ENCODE measurements at regions of chr1 and their contacts with region 1.

Region 1: GRCh38 chr1:58783993-58784757 is at the start of gene JUN:
- DNase-seq: peak; percentile 92 to 100 (median 98)
- ATAC-seq: peak; percentile 69 to 73
- H3K4me3 Mint-ChIP-seq: peak within 1 kb of the TSS; percentile 79 to 100 (median 92)
- H3K27ac Mint-ChIP-seq: peak within 1 kb of the TSS; percentile 93 to 100 (median 100)
- H3K4me1 Mint-ChIP-seq: peaks cover 28 to 44% (median 42%) of the 10 kb centered on the region in 4 donors
- H3K27me3 Mint-ChIP-seq: peaks cover 0 to 6% (median 0%) of the 10 kb centered on the region in 5 donors
- polyA plus RNA-seq, gene JUN: 30.7 to 59.4 (median 32.0) TPM

Region 2: DNA sequence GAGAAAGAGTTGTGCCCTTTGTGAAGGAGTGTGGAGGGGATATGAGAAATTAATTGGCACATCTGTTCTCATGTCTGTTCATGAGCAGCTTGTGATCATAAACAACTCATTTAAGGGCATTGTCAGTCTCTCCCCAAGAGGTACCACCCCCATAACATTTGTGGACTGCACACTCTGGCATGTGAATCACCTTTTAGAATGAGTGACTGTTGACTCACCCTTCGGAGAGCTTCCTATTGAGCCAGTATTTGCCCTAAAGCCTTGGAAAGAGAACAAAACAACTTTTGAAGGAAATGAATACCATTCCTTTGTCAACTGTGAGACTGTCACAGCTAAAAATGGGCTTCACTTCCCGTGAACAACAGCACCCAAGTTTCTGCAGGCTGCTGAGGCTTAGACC is 56.8 kb before region 1 on chr1:
- POLR2A ChIA-PET with region 1: no interaction called
- DNase-seq: no peak
- ATAC-seq: no peak
- H3K4me3 Mint-ChIP-seq: no peak overlapping the region
- H3K27ac Mint-ChIP-seq: no peak overlapping the region
- H3K4me1 Mint-ChIP-seq: peaks cover 0 to 10% (median 2%) of the 10 kb centered on the region in 4 donors
- H3K27me3 Mint-ChIP-seq: no peaks in the 10 kb centered on the region

Region 3: DNA sequence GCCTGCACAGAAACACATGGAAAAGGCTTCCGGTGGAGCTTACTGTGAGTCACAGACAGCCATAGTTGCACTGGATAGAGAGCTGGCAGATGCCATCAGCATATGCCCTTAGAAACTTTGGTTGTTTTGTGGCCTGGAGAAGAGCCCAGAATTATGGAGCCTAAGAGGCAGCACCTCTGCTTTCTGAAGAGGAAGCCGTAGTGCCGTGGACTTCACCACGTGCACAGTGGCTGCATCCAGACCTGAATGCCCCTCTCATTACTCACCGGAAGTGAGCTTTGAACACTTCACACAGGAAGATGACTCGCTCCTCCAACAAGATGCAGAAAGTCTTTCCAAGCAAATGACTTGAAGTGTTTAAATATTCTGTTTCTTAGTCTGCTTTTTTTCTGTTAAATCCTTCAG is 28.7 kb before region 1 on chr1:
- POLR2A ChIA-PET with region 1: interaction called, 11 read pairs
- DNase-seq: peak in 6 of 10 donors; percentile 3 to 43 (median 17)
- ATAC-seq: peak; percentile 69 to 74
- H3K4me3 Mint-ChIP-seq: peak overlapping the region in 9 of 10 donors; percentile 52 to 76 (median 67)
- H3K27ac Mint-ChIP-seq: peak overlapping the region; percentile 14 to 83 (median 66)
- H3K4me1 Mint-ChIP-seq: peaks cover 22 to 50% (median 42%) of the 10 kb centered on the region in 4 donors
- H3K27me3 Mint-ChIP-seq: no peaks in the 10 kb centered on the region

Region 4: GRCh38 chr1:58816072-58816746 is 32.0 kb after region 1 on chr1:
- POLR2A ChIA-PET with region 1: interaction called, 31 read pairs
- DNase-seq: peak; percentile 58 to 86 (median 72)
- ATAC-seq: peak; percentile 79 to 89
- H3K4me3 Mint-ChIP-seq: peak overlapping the region; percentile 85 to 94 (median 90)
- H3K27ac Mint-ChIP-seq: peak overlapping the region; percentile 86 to 94 (median 90)
- H3K4me1 Mint-ChIP-seq: peaks cover 18 to 57% (median 41%) of the 10 kb centered on the region in 4 donors
- H3K27me3 Mint-ChIP-seq: no peaks in the 10 kb centered on the region

Region 5: GRCh38 chr1:58908561-58909560 is 124.7 kb after region 1 on chr1:
- POLR2A ChIA-PET with region 1: no interaction called
- DNase-seq: no peak
- ATAC-seq: no peak
- H3K4me3 Mint-ChIP-seq: no peak overlapping the region
- H3K27ac Mint-ChIP-seq: no peak overlapping the region
- H3K4me1 Mint-ChIP-seq: peaks cover 5 to 12% (median 11%) of the 10 kb centered on the region in 4 donors
- H3K27me3 Mint-ChIP-seq: peaks cover 0 to 3% (median 0%) of the 10 kb centered on the region in 5 donors

Region 6: DNA sequence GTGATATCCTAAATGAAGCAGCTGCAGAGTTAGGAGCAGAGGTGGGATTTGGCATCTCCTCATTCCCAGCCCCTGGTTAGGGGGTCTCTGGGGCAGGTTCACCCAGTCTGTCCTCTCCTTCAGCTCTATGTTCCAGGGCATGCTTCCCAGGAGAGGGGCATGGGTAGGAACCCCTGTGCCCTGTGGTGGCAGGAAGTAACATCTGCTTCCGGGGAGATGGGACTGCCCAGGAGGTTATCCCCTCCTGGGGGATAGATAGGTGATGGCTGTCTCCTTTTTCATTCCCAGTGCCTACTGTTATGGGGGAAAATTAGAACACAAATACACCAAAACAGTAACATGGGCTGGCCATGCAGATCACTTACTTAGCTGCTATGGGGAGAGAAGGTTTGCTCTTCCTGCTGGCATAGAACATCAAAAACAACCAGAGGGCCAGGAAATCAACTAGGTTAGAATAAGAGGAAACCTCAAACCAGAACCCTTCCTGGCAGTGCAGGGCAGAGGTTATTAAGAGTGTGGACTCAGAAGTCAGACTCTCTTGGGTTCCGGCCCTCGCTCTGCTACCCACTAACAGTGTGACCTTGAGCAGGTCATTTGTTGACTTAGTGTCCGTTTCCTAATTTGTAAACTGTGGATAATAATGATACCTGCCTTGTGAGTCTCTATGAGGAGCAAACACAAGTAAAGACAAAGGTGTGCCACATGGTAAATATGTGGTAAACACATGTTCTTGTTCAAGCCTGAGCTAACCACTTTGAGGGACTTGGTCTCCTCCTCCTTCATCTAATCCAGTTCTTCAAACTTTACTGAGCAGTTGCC is 157.5 kb after region 1 on chr1:
- POLR2A ChIA-PET with region 1: interaction called, 13 read pairs
- DNase-seq: peak in 7 of 10 donors; percentile 16 to 78 (median 42)
- ATAC-seq: peak; percentile 86
- H3K4me3 Mint-ChIP-seq: peak overlapping the region; percentile 63 to 86 (median 78)
- H3K27ac Mint-ChIP-seq: peak overlapping the region in 9 of 10 donors; percentile 38 to 89 (median 80)
- H3K4me1 Mint-ChIP-seq: peaks cover 58 to 83% (median 77%) of the 10 kb centered on the region in 4 donors
- H3K27me3 Mint-ChIP-seq: no peaks in the 10 kb centered on the region

Region 7: DNA sequence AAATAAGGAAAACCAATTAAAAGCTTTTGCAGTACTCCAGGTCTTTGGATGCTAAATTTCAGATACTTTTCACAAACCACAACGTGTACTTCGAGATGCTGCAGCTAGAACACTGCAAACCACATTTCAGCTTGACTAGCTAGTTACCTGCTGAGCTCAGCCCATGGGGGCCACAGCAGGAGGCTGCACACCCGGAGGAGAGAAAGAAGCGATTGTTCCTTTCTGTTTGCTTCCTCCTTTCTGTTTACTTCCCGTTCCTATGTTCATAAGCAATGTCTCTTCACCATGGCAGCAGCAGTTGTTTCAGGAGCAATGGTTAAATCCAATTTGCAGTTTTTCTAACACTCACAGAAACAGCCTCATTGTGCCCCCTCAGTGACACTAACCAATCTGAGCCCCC is 287.1 kb after region 1 on chr1:
- POLR2A ChIA-PET with region 1: interaction called, 18 read pairs
- DNase-seq: peak in 6 of 10 donors; percentile 8 to 46 (median 26)
- ATAC-seq: peak; percentile 75 to 86
- H3K4me3 Mint-ChIP-seq: peak overlapping the region; percentile 16 to 76 (median 66)
- H3K27ac Mint-ChIP-seq: peak overlapping the region; percentile 13 to 89 (median 84)
- H3K4me1 Mint-ChIP-seq: peaks cover 12 to 34% (median 28%) of the 10 kb centered on the region in 4 donors
- H3K27me3 Mint-ChIP-seq: no peaks in the 10 kb centered on the region

Measured in naive thymus-derived CD8-positive, alpha-beta T cell (primary cell).